CD8-positive, alpha-beta T cell (primary cell): ENCODE measurements at regions of chrX and their contacts with region 1.

Region 1: GRCh38 chrX:41084044-41084892 is 977 bp upstream of the USP9X start:
- DNase-seq: peak; percentile 88 to 100 (median 96)
- ATAC-seq: peak; percentile 66
- H3K4me3 ChIP-seq: peak overlapping the region; percentile 68 to 95
- H3K4me3 Mint-ChIP-seq: peak overlapping the region; percentile 95
- H3K27ac ChIP-seq: peak overlapping the region; percentile 98 to 100
- H3K27ac Mint-ChIP-seq: peak overlapping the region; percentile 100
- H3K4me1 ChIP-seq: peaks cover 19% of the 10 kb centered on the region
- H3K4me1 Mint-ChIP-seq: peaks cover 24% of the 10 kb centered on the region
- H3K27me3 ChIP-seq: no peaks in the 10 kb centered on the region
- H3K27me3 Mint-ChIP-seq: no peaks in the 10 kb centered on the region
- CTCF ChIP-seq: no peak

Region 2: GRCh38 chrX:40580537-40581335 is 503.5 kb before region 1 on chrX and contains the start of gene ATP6AP2:
- CTCF ChIA-PET with region 1: no interaction called
- POLR2A ChIA-PET with region 1: no interaction called
- intact Hi-C with region 1: loop called (anchors 1 to 2 kb)
- DNase-seq: peak; percentile 76 to 95 (median 88)
- ATAC-seq: peak; percentile 95
- H3K4me3 ChIP-seq: peak within 1 kb of the TSS; percentile 82 to 93
- H3K4me3 Mint-ChIP-seq: peak within 1 kb of the TSS; percentile 91
- H3K27ac ChIP-seq: peak within 1 kb of the TSS; percentile 89 to 96
- H3K27ac Mint-ChIP-seq: peak within 1 kb of the TSS; percentile 97
- H3K4me1 ChIP-seq: peaks cover 18% of the 10 kb centered on the region
- H3K4me1 Mint-ChIP-seq: peaks cover 30% of the 10 kb centered on the region
- H3K27me3 ChIP-seq: no peaks in the 10 kb centered on the region
- H3K27me3 Mint-ChIP-seq: no peaks in the 10 kb centered on the region
- CTCF ChIP-seq: no peak
- total RNA-seq, gene ATP6AP2: 62.0 to 67.3 TPM

Region 3: DNA sequence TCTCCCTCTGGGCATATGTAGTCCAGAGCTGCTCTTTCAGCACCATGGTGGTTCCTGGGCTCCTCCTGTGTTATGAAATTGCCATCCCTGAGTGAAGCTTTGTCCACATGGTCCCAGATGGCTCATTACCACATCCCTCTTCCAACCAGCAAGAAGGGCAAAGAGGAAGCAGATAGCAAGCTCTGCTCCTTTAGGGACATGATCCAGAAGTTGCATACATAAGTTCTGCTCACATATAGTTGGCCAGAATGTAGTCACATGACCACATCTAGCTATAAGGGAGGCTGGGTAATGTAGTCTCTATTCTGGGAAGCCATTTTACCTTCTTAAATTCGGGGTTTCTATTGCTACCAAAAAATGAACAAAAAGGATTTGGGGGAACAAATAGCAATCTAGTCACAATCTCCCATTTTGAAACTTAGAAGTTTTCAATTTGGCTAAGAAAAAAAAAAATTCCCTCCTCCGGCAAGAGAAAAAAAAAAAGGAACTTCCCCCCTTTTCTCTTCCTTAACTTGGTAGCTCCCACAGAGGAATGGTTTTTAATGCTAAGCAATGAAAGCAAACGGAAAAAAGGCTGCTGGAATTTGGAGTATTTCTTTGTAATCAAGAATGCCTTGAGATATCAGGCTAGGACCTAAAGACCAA is 87.3 kb before region 1 on chrX:
- CTCF ChIA-PET with region 1: no interaction called
- POLR2A ChIA-PET with region 1: no interaction called
- intact Hi-C with region 1: no loop called
- DNase-seq: peak in 2 of 9 experiments; percentile 1 to 14
- ATAC-seq: no peak
- H3K4me3 ChIP-seq: no peak overlapping the region
- H3K4me3 Mint-ChIP-seq: no peak overlapping the region
- H3K27ac ChIP-seq: no peak overlapping the region
- H3K27ac Mint-ChIP-seq: no peak overlapping the region
- H3K4me1 ChIP-seq: no peaks in the 10 kb centered on the region
- H3K4me1 Mint-ChIP-seq: no peaks in the 10 kb centered on the region
- H3K27me3 ChIP-seq: no peaks in the 10 kb centered on the region
- H3K27me3 Mint-ChIP-seq: no peaks in the 10 kb centered on the region
- CTCF ChIP-seq: no peak

Region 4: GRCh38 chrX:41010188-41010846 is 74.0 kb before region 1 on chrX:
- CTCF ChIA-PET with region 1: no interaction called
- POLR2A ChIA-PET with region 1: interaction called, 17 read pairs
- intact Hi-C with region 1: loop called in 1 of 2 experiments (anchors 1 kb)
- DNase-seq: peak; percentile 0 to 77 (median 44)
- ATAC-seq: peak; percentile 85
- H3K4me3 ChIP-seq: peak overlapping the region; percentile 38 to 59
- H3K4me3 Mint-ChIP-seq: peak overlapping the region; percentile 80
- H3K27ac ChIP-seq: peak overlapping the region; percentile 55 to 78
- H3K27ac Mint-ChIP-seq: peak overlapping the region; percentile 89
- H3K4me1 ChIP-seq: peaks cover 7% of the 10 kb centered on the region
- H3K4me1 Mint-ChIP-seq: peaks cover 15% of the 10 kb centered on the region
- H3K27me3 ChIP-seq: no peaks in the 10 kb centered on the region
- H3K27me3 Mint-ChIP-seq: no peaks in the 10 kb centered on the region
- CTCF ChIP-seq: no peak

Region 5: DNA sequence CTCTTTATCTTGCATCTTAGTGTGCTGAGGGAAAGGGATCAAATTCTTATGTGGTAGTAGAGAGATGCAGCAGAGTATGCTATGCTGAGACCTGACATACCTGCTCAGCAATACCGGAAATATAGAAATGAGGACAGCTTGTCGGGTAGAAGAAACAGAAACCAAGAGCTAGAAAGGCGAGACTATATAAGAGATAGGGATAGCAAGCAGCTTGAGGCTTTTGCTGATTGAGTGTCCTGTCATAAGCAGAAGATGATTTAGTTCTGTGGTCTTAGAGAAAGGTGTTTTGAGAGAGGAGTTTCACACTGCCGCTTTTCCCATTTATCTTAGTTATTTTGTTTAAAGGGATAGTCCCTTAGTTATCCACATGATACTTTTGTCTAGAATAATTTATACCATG is 32.7 kb after region 1 on chrX:
- CTCF ChIA-PET with region 1: interaction called, 3 read pairs
- POLR2A ChIA-PET with region 1: interaction called, 37 read pairs
- intact Hi-C with region 1: loop called (anchors 1 to 2 kb)
- DNase-seq: peak in 2 of 9 experiments; percentile 48 to 65
- ATAC-seq: peak; percentile 62
- H3K4me3 ChIP-seq: no peak overlapping the region
- H3K4me3 Mint-ChIP-seq: peak overlapping the region; percentile 63
- H3K27ac ChIP-seq: peak overlapping the region in 1 of 2 experiments; percentile 38
- H3K27ac Mint-ChIP-seq: peak overlapping the region; percentile 79
- H3K4me1 ChIP-seq: peaks cover 43% of the 10 kb centered on the region
- H3K4me1 Mint-ChIP-seq: peaks cover 74% of the 10 kb centered on the region
- H3K27me3 ChIP-seq: no peaks in the 10 kb centered on the region
- H3K27me3 Mint-ChIP-seq: no peaks in the 10 kb centered on the region
- CTCF ChIP-seq: no peak

Region 6: DNA sequence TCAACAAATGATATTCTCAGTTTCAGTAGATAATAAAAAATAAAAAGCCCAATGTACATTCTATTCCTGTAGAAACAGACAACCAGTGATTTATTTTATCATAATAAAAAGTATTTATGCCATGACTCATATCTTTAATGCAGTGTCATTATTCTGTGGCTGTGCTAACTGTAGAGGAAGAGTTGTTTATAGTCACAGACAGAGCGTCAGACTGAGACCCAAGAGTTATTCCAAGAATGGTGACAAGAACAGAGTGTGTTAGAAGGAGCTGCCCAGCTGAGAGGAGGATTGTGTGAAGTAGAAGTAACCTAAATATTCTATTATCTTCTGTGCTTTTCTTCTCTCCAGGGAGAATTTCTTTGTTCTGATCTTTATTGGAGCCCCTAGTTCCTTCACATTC is 1483.0 kb after region 1 on chrX:
- CTCF ChIA-PET with region 1: no interaction called
- POLR2A ChIA-PET with region 1: no interaction called
- intact Hi-C with region 1: no loop called
- DNase-seq: no peak
- ATAC-seq: no peak
- H3K4me3 ChIP-seq: no peak overlapping the region
- H3K4me3 Mint-ChIP-seq: no peak overlapping the region
- H3K27ac ChIP-seq: no peak overlapping the region
- H3K27ac Mint-ChIP-seq: no peak overlapping the region
- H3K4me1 ChIP-seq: no peaks in the 10 kb centered on the region
- H3K4me1 Mint-ChIP-seq: peaks cover 4% of the 10 kb centered on the region
- H3K27me3 ChIP-seq: no peaks in the 10 kb centered on the region
- H3K27me3 Mint-ChIP-seq: no peaks in the 10 kb centered on the region
- CTCF ChIP-seq: no peak